ENCODE measurements at regions of chr5 and their contacts with region 1.

Region 1: DNA sequence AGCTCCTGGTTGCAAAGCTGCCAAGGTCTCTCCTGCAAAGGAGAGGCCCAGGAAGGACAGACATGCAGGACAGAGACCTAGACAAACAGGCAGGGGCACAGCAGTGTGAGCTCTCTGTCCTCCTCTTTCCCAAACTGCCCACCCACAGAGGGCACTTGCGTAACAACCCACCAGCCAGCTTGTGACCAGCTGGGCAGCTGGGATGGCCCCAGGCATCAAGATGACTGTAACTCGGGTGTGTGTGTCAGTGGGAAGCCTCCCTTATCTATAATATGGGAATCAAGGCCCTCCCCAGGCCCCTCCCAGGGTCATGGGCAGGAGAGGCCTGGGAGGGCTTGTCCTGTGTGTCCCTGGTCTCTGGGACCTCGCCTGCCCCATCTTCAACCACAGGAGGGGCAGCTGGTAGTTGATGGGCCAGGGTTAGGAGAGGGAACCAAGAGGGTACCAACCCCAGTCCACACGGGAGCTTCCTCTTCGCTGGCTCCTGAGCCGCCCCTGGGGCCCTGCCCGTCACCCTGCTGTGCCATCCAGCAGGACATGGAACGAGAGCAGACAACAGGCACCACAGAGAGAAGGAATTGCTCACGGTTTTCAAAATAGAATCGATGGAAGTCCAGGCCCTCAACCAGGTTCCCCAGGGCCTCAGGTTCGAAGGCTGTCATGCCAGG is 37.9 kb downstream of the SLC6A7 start:
- DNase-seq: no peak
- ATAC-seq: no peak
- H3K4me3 ChIP-seq: no peak overlapping the region
- H3K27ac ChIP-seq: no peak overlapping the region
- H3K4me1 ChIP-seq: no peaks in the 10 kb centered on the region
- H3K27me3 ChIP-seq: no peaks in the 10 kb centered on the region; a peak in 1 of 4 replicates
- CTCF ChIP-seq: no peak
- EP300 ChIP-seq: no peak
- POLR2A ChIP-seq: no peak
- RAD21 ChIP-seq: no peak

Region 2: DNA sequence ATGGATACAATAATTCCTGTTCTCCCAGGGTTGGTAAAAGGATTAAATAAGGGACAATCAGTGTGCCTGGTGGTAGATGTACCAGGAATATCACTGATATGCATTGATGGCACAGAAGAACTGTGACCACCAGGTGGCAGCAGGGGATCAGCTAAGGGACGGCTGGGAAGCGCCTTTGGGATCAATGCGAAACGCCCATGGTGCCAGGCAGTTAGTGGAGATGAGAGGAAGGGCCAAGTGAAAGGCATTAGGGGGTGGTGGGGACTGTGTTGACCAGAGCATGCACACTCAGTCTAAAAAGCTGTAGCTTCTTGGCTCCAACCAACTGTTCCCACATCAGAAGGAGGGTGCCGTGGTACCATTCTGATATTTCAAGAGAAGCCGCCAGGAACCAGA is 590.9 kb before region 1 on chr5:
- CTCF ChIA-PET with region 1: no interaction called
- POLR2A ChIA-PET with region 1: no interaction called
- RAD21 ChIA-PET with region 1: no interaction called
- SMC1A ChIA-PET with region 1: no interaction called
- in situ Hi-C with region 1: loop called (anchors 10 kb)
- intact Hi-C with region 1: no loop called
- DNase-seq: no peak
- ATAC-seq: peak; percentile 85
- H3K4me3 ChIP-seq: no peak overlapping the region
- H3K27ac ChIP-seq: no peak overlapping the region
- H3K4me1 ChIP-seq: peaks cover 12% of the 10 kb centered on the region
- H3K27me3 ChIP-seq: no peaks in the 10 kb centered on the region
- CTCF ChIP-seq: peak; percentile 74 to 78 (median 77)
- EP300 ChIP-seq: no peak
- POLR2A ChIP-seq: no peak
- RAD21 ChIP-seq: peak; percentile 87

Region 3: DNA sequence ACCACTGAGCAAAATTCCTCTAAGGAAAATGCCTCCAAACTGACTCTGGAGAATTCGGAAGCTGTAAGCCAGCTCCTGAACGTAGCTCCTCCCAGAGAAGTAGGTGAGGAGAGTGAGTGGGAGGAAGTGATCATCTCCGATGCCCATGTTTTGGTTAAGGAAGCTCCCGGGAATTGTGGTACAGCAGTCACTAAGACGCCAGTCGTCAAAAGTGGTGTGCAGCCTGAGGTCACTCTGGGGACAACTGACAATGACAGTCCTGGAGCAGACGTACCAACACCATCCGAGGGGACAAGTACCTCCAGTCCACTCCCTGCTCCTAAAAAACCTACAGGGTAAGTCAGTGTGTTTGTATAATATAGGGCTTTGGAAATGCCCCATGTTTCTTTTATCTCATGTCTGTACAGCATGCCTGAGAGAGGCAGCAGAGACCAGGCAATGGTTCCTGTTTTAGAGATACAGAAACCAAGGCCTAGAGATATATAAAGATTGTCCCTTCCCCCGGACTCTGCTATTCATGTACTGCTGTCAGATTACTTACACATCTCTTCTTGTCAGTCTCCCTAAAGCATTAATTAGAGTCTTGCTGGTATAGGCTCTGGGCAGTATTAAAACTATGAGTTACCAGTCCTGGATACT is 203.3 kb before region 1 on chr5:
- CTCF ChIA-PET with region 1: no interaction called
- POLR2A ChIA-PET with region 1: no interaction called
- RAD21 ChIA-PET with region 1: no interaction called
- SMC1A ChIA-PET with region 1: no interaction called
- in situ Hi-C with region 1: no loop called
- intact Hi-C with region 1: no loop called
- DNase-seq: no peak
- ATAC-seq: 0 out of 3 replicates have a peak, but pooled peaks have one; percentile 25
- H3K4me3 ChIP-seq: no peak overlapping the region
- H3K27ac ChIP-seq: no peak overlapping the region
- H3K4me1 ChIP-seq: no peaks in the 10 kb centered on the region
- H3K27me3 ChIP-seq: no peaks in the 10 kb centered on the region
- CTCF ChIP-seq: peak in 2 of 3 experiments; percentile 4 to 25; a peak in 2 of 6 replicates
- EP300 ChIP-seq: no peak
- POLR2A ChIP-seq: no peak
- RAD21 ChIP-seq: peak; percentile 52

Region 4: GRCh38 chr5:150052956-150053712 is 174.6 kb before region 1 on chr5:
- CTCF ChIA-PET with region 1: no interaction called
- POLR2A ChIA-PET with region 1: no interaction called
- RAD21 ChIA-PET with region 1: no interaction called
- SMC1A ChIA-PET with region 1: no interaction called
- in situ Hi-C with region 1: no loop called
- intact Hi-C with region 1: no loop called
- DNase-seq: no peak
- ATAC-seq: no peak
- H3K4me3 ChIP-seq: no peak overlapping the region
- H3K27ac ChIP-seq: no peak overlapping the region
- H3K4me1 ChIP-seq: no peaks in the 10 kb centered on the region
- H3K27me3 ChIP-seq: no peaks in the 10 kb centered on the region
- CTCF ChIP-seq: no peak
- EP300 ChIP-seq: no peak
- POLR2A ChIP-seq: no peak; the same call in 1 of the 2 replicates
- RAD21 ChIP-seq: no peak

Measured in GM12878 (cell line).